ENCODE measurements at regions of chr7 and their contacts with region 1.

Region 1: GRCh38 chr7:102390697-102391484 is 5.3 kb upstream of the PRKRIP1 start:
- DNase-seq: peak; percentile 92
- ATAC-seq: peak; percentile 91
- H3K4me3 Mint-ChIP-seq: no peak overlapping the region
- H3K27ac Mint-ChIP-seq: no peak overlapping the region
- H3K4me1 Mint-ChIP-seq: no peaks in the 10 kb centered on the region; the same call in 1 of the 2 replicates
- H3K27me3 Mint-ChIP-seq: no peaks in the 10 kb centered on the region
- CTCF ChIP-seq: peak; percentile 83

Region 2: DNA sequence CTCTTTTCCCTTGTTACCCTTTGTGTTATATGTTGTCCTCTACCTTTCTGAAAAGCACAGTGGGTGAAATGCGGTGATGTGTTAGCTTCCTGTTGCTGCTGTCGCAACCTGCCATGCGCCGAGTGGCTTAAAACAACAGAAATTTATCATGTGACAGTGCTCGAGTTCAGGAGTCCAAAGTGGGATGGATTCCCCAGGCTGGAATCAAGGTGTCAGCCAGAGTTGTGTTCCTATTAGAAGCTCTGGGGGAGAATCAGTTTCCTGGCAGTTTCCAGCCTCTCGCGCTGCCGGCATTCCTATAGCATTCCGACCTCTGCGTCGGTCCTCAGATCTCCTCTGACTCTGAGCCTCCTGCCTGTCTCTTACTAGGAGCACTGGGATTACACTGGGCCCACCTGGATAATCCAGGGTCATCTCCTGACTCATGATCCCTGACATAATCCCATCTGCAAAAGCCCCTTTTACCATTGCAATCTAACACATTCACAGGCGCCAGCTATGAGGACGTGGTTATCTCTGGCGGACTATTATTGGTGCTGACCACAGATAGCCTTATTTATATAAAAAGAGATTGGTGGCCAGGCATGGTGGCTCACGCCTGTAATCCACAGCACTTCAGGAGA is 366.0 kb before region 1 on chr7:
- CTCF ChIA-PET with region 1: no interaction called
- POLR2A ChIA-PET with region 1: interaction called, 10 read pairs
- DNase-seq: no peak
- ATAC-seq: peak; percentile 63
- H3K4me3 Mint-ChIP-seq: no peak overlapping the region
- H3K27ac Mint-ChIP-seq: peak overlapping the region; percentile 90
- H3K4me1 Mint-ChIP-seq: peaks cover 24% of the 10 kb centered on the region
- H3K27me3 Mint-ChIP-seq: no peaks in the 10 kb centered on the region
- CTCF ChIP-seq: no peak

Region 3: GRCh38 chr7:102152672-102153585 is 238.0 kb before region 1 on chr7:
- CTCF ChIA-PET with region 1: no interaction called
- POLR2A ChIA-PET with region 1: interaction called, 10 read pairs
- DNase-seq: peak; percentile 73
- ATAC-seq: peak; percentile 84
- H3K4me3 Mint-ChIP-seq: peak overlapping the region; percentile 38; the same call in 1 of the 2 replicates
- H3K27ac Mint-ChIP-seq: peak overlapping the region; percentile 98
- H3K4me1 Mint-ChIP-seq: peaks cover 35% of the 10 kb centered on the region
- H3K27me3 Mint-ChIP-seq: no peaks in the 10 kb centered on the region
- CTCF ChIP-seq: no peak

Region 4: DNA sequence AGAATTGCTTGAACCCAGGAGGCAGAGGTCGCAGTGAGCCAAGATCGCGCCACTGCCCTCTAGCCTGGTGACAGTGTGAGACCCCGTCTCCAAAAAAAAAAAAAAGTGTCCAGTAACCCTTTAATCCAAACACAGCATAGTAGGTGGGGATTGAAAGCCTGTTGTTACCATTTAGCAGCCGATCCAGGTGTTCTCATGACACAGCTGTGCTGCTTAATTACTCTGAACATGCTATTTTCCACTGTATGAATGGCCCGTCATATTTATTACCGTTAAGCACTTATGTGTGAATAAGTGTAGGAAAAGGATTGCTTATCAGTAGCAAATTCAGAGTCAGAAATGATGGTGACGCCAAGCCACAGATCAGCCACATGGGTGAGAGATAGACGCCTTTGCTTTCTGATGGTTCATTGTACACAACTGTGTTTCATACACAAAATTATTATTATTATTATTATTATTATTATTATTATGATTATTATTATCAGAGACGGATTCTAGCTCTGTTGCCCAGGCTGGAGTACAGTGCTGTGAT is 30.9 kb after region 1 on chr7:
- CTCF ChIA-PET with region 1: no interaction called
- POLR2A ChIA-PET with region 1: interaction called, 10 read pairs
- DNase-seq: no peak
- ATAC-seq: no peak
- H3K4me3 Mint-ChIP-seq: no peak overlapping the region
- H3K27ac Mint-ChIP-seq: no peak overlapping the region
- H3K4me1 Mint-ChIP-seq: peaks cover 12% of the 10 kb centered on the region
- H3K27me3 Mint-ChIP-seq: no peaks in the 10 kb centered on the region
- CTCF ChIP-seq: no peak

Region 5: DNA sequence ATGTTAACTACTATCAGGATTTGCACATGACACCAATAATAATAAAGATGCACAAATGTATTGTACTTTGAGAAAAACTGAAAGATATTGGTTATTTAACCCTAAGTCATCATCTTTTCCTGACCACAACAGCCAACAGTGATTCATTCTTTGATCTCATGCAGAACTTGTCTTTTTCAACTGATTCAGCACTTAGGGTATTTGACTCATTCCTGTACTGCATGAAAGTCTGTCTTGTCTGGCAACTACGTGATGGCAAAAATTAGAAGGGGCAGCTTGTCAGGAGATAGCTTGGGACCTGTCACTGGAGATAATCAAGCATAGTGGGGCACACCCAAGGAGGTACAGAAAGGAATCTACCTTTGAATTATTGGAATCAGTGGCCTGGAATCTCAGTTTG is 444.1 kb after region 1 on chr7:
- CTCF ChIA-PET with region 1: no interaction called
- POLR2A ChIA-PET with region 1: no interaction called
- DNase-seq: no peak
- ATAC-seq: no peak
- H3K4me3 Mint-ChIP-seq: no peak overlapping the region
- H3K27ac Mint-ChIP-seq: no peak overlapping the region
- H3K4me1 Mint-ChIP-seq: peaks cover 2% of the 10 kb centered on the region
- H3K27me3 Mint-ChIP-seq: no peaks in the 10 kb centered on the region
- CTCF ChIP-seq: no peak

Measured in WTC11 (cell line).